ENCODE measurements at regions of chr20 and their contacts with region 1.

Region 1: GRCh38 chr20:53915446-53916172 is 154.8 kb downstream of the BCAS1 start:
- DNase-seq: peak; percentile 98
- H3K4me3 Mint-ChIP-seq: peak overlapping the region; percentile 91
- H3K27ac Mint-ChIP-seq: peak overlapping the region; percentile 82
- H3K4me1 Mint-ChIP-seq: peaks cover 40% of the 10 kb centered on the region
- H3K27me3 Mint-ChIP-seq: no peaks in the 10 kb centered on the region

Region 2: DNA sequence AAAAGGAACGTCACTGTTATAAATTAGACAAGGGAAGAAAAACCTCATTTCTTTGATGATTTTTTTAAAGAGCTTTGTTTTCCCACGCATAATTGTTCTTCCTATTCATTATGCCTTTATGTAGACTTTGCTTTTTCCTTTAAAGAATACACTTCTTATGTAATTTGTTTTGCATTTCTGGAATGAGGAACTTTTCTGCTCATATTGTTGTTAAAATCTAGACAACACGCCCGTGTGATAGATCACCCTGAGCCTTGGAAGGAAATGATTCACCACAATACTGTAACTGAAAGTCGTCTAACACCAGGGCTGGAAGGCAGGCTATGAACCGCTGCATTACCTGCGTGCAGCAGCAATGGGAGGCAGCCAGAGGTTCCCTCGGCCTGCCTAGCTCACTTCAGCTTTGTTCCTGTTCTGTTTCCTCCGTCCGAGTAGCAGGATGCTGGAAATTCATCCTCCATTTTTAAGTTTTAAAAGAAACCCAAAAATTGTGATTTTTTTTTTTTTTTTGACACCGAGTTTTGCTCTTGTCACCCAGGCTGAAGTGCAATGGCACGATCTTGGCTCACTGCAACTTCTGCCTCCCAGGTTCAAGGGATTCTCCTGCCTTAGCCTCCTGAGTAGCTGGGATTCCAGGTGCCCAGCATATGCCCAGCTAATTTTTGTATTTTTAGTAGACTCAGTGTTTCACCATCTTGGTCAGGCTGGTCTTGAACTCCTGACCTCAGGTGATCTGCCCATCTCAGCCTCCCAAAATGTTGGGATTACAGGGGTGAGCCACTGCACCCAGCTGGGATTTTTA is 272.4 kb before region 1 on chr20:
- CTCF ChIA-PET with region 1: interaction called, 5 read pairs
- POLR2A ChIA-PET with region 1: no interaction called
- intact Hi-C with region 1: loop called (anchors 5 kb)
- DNase-seq: peak; percentile 76
- H3K4me3 Mint-ChIP-seq: peak overlapping the region; percentile 68
- H3K27ac Mint-ChIP-seq: peak overlapping the region; percentile 88
- H3K4me1 Mint-ChIP-seq: peaks cover 28% of the 10 kb centered on the region
- H3K27me3 Mint-ChIP-seq: no peaks in the 10 kb centered on the region

Region 3: GRCh38 chr20:53839423-53840176 is 76.0 kb before region 1 on chr20:
- CTCF ChIA-PET with region 1: interaction called, 7 read pairs
- POLR2A ChIA-PET with region 1: interaction called, 5 read pairs
- intact Hi-C with region 1: loop called (anchors 2 kb)
- DNase-seq: peak; percentile 66
- H3K4me3 Mint-ChIP-seq: peak overlapping the region; percentile 58
- H3K27ac Mint-ChIP-seq: peak overlapping the region; percentile 76
- H3K4me1 Mint-ChIP-seq: peaks cover 64% of the 10 kb centered on the region
- H3K27me3 Mint-ChIP-seq: no peaks in the 10 kb centered on the region

Region 4: GRCh38 chr20:53891306-53891944 is 24.2 kb before region 1 on chr20:
- CTCF ChIA-PET with region 1: interaction called, 3 read pairs
- POLR2A ChIA-PET with region 1: no interaction called
- intact Hi-C with region 1: loop called (anchors 1 kb)
- DNase-seq: no peak
- H3K4me3 Mint-ChIP-seq: no peak overlapping the region
- H3K27ac Mint-ChIP-seq: no peak overlapping the region
- H3K4me1 Mint-ChIP-seq: peaks cover 30% of the 10 kb centered on the region
- H3K27me3 Mint-ChIP-seq: no peaks in the 10 kb centered on the region

Region 5: GRCh38 chr20:53926428-53927028 is 10.9 kb after region 1 on chr20:
- CTCF ChIA-PET with region 1: interaction called, 17 read pairs
- POLR2A ChIA-PET with region 1: no interaction called
- intact Hi-C with region 1: no loop called
- DNase-seq: peak; percentile 64
- H3K4me3 Mint-ChIP-seq: no peak overlapping the region
- H3K27ac Mint-ChIP-seq: peak overlapping the region; percentile 30
- H3K4me1 Mint-ChIP-seq: peaks cover 35% of the 10 kb centered on the region
- H3K27me3 Mint-ChIP-seq: no peaks in the 10 kb centered on the region

Region 6: DNA sequence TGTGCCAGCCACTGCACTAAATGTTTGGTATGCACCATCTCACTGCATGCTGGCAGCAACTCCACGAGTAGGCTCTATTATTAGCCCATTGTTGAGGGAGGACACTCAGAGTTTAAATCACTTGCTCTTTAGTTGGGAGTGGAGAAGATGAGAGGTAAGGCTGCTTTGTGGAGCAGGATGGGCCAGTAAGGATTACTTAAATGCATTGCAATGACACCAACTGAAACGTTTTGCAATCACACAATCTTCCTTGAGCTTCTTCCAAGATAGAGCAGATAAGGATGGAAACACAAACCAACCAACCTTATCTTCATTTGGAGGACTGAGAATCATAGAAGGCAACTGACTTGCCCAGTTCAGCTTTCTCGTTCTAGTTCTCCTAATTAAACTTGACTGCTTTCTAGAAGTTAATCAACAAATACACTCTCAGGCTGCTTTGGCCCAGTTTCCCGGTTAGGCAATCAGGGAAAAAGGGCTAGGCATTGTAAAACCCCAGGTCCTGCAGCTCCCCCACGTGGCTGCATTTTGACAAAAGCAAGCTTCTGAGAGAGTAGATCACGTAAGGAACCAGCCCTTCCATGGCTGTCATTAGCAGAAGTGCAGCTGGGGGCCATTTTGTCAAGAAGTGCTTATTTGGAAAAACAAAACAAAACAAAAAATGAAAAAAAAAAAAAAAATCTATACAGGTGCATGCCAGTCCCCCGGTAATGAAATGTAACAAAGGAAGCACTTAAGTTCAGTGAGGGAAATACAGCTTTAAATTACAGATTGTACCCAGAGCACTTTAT is 24.2 kb after region 1 on chr20:
- CTCF ChIA-PET with region 1: interaction called, 23 read pairs
- POLR2A ChIA-PET with region 1: interaction called, 5 read pairs
- intact Hi-C with region 1: no loop called
- DNase-seq: peak; percentile 87
- H3K4me3 Mint-ChIP-seq: no peak overlapping the region
- H3K27ac Mint-ChIP-seq: no peak overlapping the region
- H3K4me1 Mint-ChIP-seq: peaks cover 28% of the 10 kb centered on the region
- H3K27me3 Mint-ChIP-seq: no peaks in the 10 kb centered on the region

Measured in activated CD4-positive, alpha-beta memory T cell treated with anti-CD3 and anti-CD28 coated beads for 36 hours (primary cell).